Endothelial cell of umbilical vein (primary cell): ENCODE measurements at regions of chr11 and their contacts with region 1.

Region 1: GRCh38 chr11:33970984-33971466 is 79.1 kb upstream of the LMO2 start:
- DNase-seq: peak; percentile 72
- H3K4me3 ChIP-seq: no peak overlapping the region
- H3K27ac ChIP-seq: no peak overlapping the region
- H3K4me1 ChIP-seq: no peaks in the 10 kb centered on the region
- H3K27me3 ChIP-seq: peaks cover 0 to 4% of the 10 kb centered on the region in 2 experiments
- CTCF ChIP-seq: peak; percentile 70 to 74
- POLR2A ChIP-seq: no peak

Region 2: GRCh38 chr11:33835143-33835878 is 135.7 kb before region 1 on chr11:
- CTCF ChIA-PET with region 1: interaction called, 20 read pairs
- POLR2A ChIA-PET with region 1: no interaction called
- dilution Hi-C with region 1: no loop called
- intact Hi-C with region 1: loop called (anchors 1 kb)
- DNase-seq: peak; percentile 37
- H3K4me3 ChIP-seq: no peak overlapping the region
- H3K27ac ChIP-seq: no peak overlapping the region
- H3K4me1 ChIP-seq: peaks cover 4% of the 10 kb centered on the region
- H3K27me3 ChIP-seq: peaks cover 9 to 11% of the 10 kb centered on the region in 2 experiments
- CTCF ChIP-seq: no peak
- POLR2A ChIP-seq: no peak

Region 3: DNA sequence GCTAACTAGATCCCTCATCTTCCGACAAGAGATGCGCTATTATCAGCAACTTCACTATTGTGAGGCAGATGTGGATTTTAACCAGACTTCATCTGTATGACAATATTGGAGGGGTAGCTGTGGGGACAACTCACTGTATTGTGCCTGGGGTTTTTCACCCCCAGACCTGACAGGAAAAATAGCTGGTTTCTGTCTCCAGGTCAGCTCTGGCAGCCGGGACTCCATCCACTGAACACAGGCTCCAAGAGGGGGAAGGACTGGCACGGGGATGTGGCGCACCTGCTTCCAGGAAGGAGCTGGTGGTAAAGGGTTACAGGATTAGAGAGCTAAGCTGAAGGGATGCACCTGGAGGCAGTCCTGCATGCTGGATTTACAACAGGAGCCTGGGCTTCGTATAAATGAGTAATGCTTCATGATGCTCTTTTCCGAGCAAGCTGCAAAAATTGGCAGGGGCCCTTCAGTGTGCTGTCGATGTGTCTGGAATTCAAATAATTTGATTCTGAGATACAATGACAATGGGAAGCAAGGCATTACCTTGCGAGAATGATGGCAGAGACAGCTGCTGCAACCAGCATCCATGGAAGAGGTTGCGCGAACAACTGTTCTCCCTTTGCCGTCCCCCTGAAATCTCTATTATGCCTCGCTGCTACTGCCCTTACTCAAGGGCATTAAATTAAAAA is 128.6 kb before region 1 on chr11:
- CTCF ChIA-PET with region 1: interaction called, 11 read pairs
- POLR2A ChIA-PET with region 1: no interaction called
- dilution Hi-C with region 1: no loop called
- intact Hi-C with region 1: no loop called
- DNase-seq: no peak
- H3K4me3 ChIP-seq: no peak overlapping the region
- H3K27ac ChIP-seq: no peak overlapping the region
- H3K4me1 ChIP-seq: no peaks in the 10 kb centered on the region
- H3K27me3 ChIP-seq: peaks cover 24 to 27% of the 10 kb centered on the region in 2 experiments
- CTCF ChIP-seq: no peak
- POLR2A ChIP-seq: no peak

Region 4: DNA sequence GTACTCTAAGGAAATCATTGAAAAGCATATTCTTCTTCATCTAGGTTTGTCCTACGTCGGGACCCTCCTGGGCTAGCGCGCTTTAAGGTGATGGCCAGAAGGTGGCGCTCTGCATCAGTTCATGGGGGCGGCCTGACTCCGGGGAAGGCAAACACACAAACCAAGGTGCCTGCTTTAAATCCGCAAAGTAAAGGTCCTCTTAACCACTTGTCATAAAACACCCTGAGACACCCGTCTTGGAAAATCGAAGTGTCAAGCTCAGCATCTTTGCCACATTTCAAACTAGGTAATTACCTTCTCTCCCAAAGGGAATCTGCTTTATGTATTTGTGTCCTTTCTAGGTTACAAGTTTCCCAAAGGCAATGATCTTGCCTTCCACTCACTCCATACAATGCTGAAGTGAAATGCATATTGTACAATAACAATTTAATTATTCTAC is 113.1 kb before region 1 on chr11:
- CTCF ChIA-PET with region 1: interaction called, 67 read pairs
- POLR2A ChIA-PET with region 1: no interaction called
- dilution Hi-C with region 1: no loop called
- intact Hi-C with region 1: loop called (anchors 1 kb)
- DNase-seq: peak; percentile 85
- H3K4me3 ChIP-seq: no peak overlapping the region
- H3K27ac ChIP-seq: no peak overlapping the region
- H3K4me1 ChIP-seq: no peaks in the 10 kb centered on the region
- H3K27me3 ChIP-seq: no peaks in the 10 kb centered on the region
- CTCF ChIP-seq: peak; percentile 89 to 92
- POLR2A ChIP-seq: no peak

Region 5: GRCh38 chr11:33863418-33864172 is 107.4 kb before region 1 on chr11:
- CTCF ChIA-PET with region 1: interaction called, 67 read pairs
- POLR2A ChIA-PET with region 1: no interaction called
- dilution Hi-C with region 1: no loop called
- intact Hi-C with region 1: loop called (anchors 1 kb)
- DNase-seq: no peak
- H3K4me3 ChIP-seq: no peak overlapping the region
- H3K27ac ChIP-seq: no peak overlapping the region
- H3K4me1 ChIP-seq: peaks cover 13% of the 10 kb centered on the region
- H3K27me3 ChIP-seq: no peaks in the 10 kb centered on the region
- CTCF ChIP-seq: no peak
- POLR2A ChIP-seq: no peak

Region 6: GRCh38 chr11:33930317-33931021 is 40.6 kb before region 1 on chr11:
- CTCF ChIA-PET with region 1: interaction called, 10 read pairs
- POLR2A ChIA-PET with region 1: no interaction called
- dilution Hi-C with region 1: no loop called
- intact Hi-C with region 1: loop called (anchors 2 kb)
- DNase-seq: peak; percentile 98
- H3K4me3 ChIP-seq: peak overlapping the region in 1 of 3 experiments; percentile 15
- H3K27ac ChIP-seq: peak overlapping the region; percentile 97
- H3K4me1 ChIP-seq: peaks cover 48% of the 10 kb centered on the region
- H3K27me3 ChIP-seq: no peaks in the 10 kb centered on the region
- CTCF ChIP-seq: no peak
- POLR2A ChIP-seq: peak; percentile 68

Region 7: DNA sequence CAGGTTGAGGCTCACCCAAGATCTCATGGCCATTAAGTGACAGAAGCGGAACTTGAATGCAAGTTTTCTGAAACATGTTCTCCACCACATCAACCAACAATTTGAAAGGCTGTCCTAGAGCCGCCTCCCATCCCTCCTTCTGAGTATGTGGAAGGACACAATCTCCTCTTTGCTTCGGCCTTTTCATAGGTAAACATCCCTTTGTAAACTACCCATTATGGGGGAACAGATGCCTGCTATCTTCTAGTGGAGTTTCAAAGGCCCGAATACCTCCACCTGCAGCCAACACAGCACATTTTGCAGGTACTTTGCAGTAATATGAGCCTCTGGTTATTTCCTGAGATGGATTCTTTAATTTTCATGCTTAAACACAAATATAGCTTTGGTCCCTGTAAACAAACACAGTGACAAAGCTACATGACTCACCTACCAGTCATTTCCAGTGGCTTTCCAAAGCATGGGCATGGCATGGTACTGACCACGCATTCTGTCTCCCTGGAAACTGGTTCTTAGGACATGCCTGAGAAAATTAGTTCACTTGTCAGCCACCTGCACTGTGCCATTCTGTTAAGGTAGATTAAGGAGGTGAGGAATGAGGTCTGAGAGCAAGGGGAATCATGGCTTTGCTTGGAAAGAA is 710.0 kb after region 1 on chr11:
- CTCF ChIA-PET with region 1: no interaction called
- POLR2A ChIA-PET with region 1: no interaction called
- dilution Hi-C with region 1: no loop called
- intact Hi-C with region 1: no loop called
- DNase-seq: peak; percentile 56
- H3K4me3 ChIP-seq: no peak overlapping the region
- H3K27ac ChIP-seq: no peak overlapping the region
- H3K4me1 ChIP-seq: peaks cover 17% of the 10 kb centered on the region
- H3K27me3 ChIP-seq: no peaks in the 10 kb centered on the region
- CTCF ChIP-seq: no peak
- POLR2A ChIP-seq: no peak